ENCODE measurements at regions of chr9 and their contacts with region 1.

Region 1: DNA sequence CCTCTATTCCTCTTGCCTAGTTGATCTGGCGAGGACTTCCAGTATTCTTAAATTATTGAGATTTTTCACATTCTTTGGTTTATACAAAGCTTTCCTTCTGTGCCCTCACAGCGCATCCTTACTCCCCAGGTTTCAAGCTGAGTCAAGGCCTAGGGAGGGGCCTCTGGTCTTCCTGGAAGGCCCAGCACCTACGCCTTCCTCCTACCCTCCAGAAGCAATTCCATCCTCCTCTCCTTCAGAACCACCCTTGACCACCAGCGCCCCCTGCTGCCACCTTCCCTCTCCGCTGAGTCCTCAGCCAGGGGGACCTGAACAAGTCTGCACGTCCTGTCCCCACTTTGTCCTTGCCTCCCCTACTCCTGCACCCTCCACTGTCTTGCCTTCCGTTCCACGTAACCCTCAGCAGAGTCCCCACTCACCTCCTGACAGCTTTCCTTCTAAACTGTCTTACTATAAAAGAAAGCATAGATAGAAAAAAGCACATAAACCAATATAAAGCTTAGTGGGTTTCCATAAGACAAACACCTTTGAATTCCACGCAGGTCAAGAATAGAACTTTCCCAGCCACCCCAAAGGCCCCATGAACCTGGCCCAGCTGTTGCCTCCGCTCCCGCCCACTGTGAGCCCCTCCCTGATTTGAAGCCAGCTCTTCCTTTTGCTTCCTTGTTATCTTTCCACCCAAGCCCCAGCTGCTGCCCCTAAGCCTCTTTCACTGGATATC is 63.0 kb upstream of the CTSL start:
- DNase-seq: peak; percentile 80
- H3K4me3 Mint-ChIP-seq: no peak overlapping the region
- H3K27ac Mint-ChIP-seq: no peak overlapping the region
- H3K4me1 Mint-ChIP-seq: peaks cover 4% of the 10 kb centered on the region
- H3K27me3 Mint-ChIP-seq: peaks cover 3% of the 10 kb centered on the region

Region 2: DNA sequence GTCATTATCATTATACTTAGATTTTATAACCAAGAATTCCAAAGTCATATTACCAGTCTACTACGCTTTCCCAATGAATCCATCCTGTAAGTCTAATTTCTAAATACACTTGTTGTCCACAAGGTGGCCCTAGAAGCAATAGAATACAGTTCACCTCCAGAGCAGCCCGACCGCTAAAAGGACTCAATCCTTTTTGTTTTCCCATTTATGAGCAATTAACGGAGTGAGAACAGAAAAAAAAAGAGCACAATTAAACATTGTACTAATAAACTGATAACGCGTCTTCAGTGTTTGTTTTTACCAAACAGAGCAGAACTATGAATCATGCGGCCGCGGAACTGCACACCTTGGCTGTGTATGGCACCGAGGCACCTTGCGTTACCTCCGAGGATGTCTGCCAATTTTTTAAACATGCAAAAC is 326.0 kb before region 1 on chr9:
- intact Hi-C with region 1: loop called (anchors 1 kb)
- DNase-seq: peak; percentile 58
- H3K4me3 Mint-ChIP-seq: peak overlapping the region; percentile 73
- H3K27ac Mint-ChIP-seq: no peak overlapping the region
- H3K4me1 Mint-ChIP-seq: peaks cover 4% of the 10 kb centered on the region
- H3K27me3 Mint-ChIP-seq: peaks cover 30% of the 10 kb centered on the region

Region 3: DNA sequence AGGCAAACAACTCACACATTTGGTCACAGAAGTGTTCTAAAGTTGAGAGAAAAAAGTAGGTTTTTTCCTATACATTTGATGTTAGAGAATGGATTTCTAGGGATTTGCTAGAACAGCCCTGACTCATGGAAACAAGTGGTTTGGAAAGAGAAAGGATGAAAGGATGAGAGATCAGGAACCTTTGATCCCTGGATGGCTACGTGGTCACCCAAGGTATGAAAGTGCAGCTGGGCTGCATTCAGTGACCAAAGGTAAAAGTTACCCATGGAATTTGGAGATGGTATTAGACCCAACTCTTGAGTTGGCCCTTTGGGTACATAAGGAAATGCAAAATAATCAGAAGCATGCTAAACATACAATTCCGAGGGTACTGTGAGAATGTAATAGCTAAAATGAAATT is 664.0 kb after region 1 on chr9:
- intact Hi-C with region 1: no loop called
- DNase-seq: no peak
- H3K4me3 Mint-ChIP-seq: no peak overlapping the region
- H3K27ac Mint-ChIP-seq: no peak overlapping the region
- H3K4me1 Mint-ChIP-seq: peaks cover 29% of the 10 kb centered on the region
- H3K27me3 Mint-ChIP-seq: no peaks in the 10 kb centered on the region

Measured in activated CD4-positive, alpha-beta T cell treated with anti-CD3 and anti-CD28 coated beads, Interleukin-2, amount 10 ng/mL, durations not matched to agents 24 days and 14 days (primary cell).